Left cardiac atrium (tissue), 4 donors: ENCODE measurements at regions of chr15 and their contacts with region 1.

Region 1: GRCh38 chr15:36389107-36389506 is 190.3 kb upstream of the CDIN1 start:
- DNase-seq: no peak
- ATAC-seq: no peak

Region 2: DNA sequence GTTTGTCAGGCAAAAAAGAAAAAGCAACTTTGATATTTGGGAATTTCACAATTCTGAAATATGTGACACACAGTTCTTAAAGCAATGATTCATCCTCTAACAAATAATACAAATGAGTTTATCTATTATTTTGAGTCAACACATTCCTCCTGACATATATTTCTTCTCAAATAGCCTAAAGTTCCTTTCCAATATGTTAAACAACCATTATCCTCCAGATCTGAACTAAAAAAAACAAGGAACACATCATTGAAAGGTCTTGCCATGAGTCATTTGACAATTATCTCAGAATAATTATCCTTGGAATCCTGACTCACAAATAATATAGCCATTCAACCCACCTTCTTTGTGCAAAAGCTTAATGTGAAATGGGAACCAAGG is 18.4 kb before region 1 on chr15:
- intact Hi-C with region 1: no loop called
- DNase-seq: no peak
- ATAC-seq: no peak

Region 3: DNA sequence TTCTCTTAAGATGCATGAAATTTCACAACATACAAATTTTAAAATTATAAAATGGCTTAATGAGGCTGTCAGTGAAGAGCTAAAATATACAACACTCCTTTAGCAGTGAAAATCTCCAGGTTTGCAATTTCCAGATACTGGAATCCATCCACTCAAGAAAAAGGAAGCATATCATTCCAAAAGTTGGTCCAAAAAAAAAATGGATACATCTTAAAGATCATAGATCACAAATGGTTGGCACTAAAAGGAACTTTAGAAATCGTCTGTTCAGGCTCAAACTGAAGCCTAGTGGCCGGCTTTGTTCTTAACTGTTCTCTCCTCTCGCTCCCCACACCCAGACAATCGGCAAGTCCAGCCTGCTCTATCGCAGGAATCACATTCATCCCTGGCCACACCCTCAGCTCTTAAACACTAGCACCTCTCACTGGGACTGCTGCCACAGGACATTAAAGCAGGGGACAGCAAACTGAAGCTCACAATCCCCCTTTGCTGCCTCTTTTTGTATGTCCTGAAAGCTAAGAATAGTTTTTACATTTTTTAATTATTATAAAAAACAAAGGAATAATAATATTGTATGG is 60.1 kb after region 1 on chr15:
- intact Hi-C with region 1: loop called in 1 of 2 experiments (anchors 10 kb)
- DNase-seq: no peak
- ATAC-seq: no peak

Region 4: GRCh38 chr15:36965570-36966342 is 576.6 kb after region 1 on chr15:
- intact Hi-C with region 1: no loop called
- DNase-seq: no peak
- ATAC-seq: peak; percentile 35 to 50